Sigmoid colon (tissue), 7 donors: ENCODE measurements at regions of chr11 and their contacts with region 1.

Region 1: GRCh38 chr11:65569973-65570918 is at the start of gene ZNRD2:
- DNase-seq: peak; percentile 100
- H3K4me3 ChIP-seq: peak within 1 kb of the TSS; percentile 66 to 87 (median 74)
- H3K27ac ChIP-seq: peak within 1 kb of the TSS; percentile 91 to 98 (median 98)
- H3K4me1 ChIP-seq: peaks cover 0 to 75% (median 58%) of the 10 kb centered on the region in 4 donors
- H3K27me3 ChIP-seq: no peaks in the 10 kb centered on the region
- CTCF ChIP-seq: peak in 1 of 4 experiments; percentile 30
- EP300 ChIP-seq: peak in 2 of 4 donors; percentile 67 to 72
- POLR2A ChIP-seq: peak; percentile 48 to 78
- total RNA-seq, gene ZNRD2: 24.9 to 61.0 (median 58.5) TPM

Region 2: GRCh38 chr11:65540297-65541092 is 29.8 kb before region 1 on chr11:
- intact Hi-C with region 1: loop called (anchors 1 kb)
- DNase-seq: peak; percentile 95
- H3K4me3 ChIP-seq: peak overlapping the region; percentile 31 to 52 (median 50)
- H3K27ac ChIP-seq: peak overlapping the region; percentile 90 to 94 (median 91)
- H3K4me1 ChIP-seq: peaks cover 0 to 30% (median 26%) of the 10 kb centered on the region in 4 donors
- H3K27me3 ChIP-seq: no peaks in the 10 kb centered on the region
- CTCF ChIP-seq: peak; percentile 90 to 99 (median 94)
- EP300 ChIP-seq: no peak
- POLR2A ChIP-seq: peak; percentile 8 to 29

Region 3: GRCh38 chr11:65558002-65558931 is 12.0 kb before region 1 on chr11 and contains the start of gene LTBP3:
- intact Hi-C with region 1: loop called (anchors 2 kb)
- DNase-seq: peak; percentile 94
- H3K4me3 ChIP-seq: peak within 1 kb of the TSS; percentile 55 to 85 (median 72)
- H3K27ac ChIP-seq: peak within 1 kb of the TSS; percentile 96 to 99 (median 98)
- H3K4me1 ChIP-seq: peaks cover 0 to 71% (median 66%) of the 10 kb centered on the region in 4 donors
- H3K27me3 ChIP-seq: no peaks in the 10 kb centered on the region
- CTCF ChIP-seq: no peak
- EP300 ChIP-seq: peak in 1 of 4 donors; percentile 45
- POLR2A ChIP-seq: no peak
- total RNA-seq, gene LTBP3: 79.6 to 268 (median 117) TPM

Region 4: GRCh38 chr11:65615229-65615941 is 45.1 kb after region 1 on chr11 and contains the start of gene PCNX3:
- intact Hi-C with region 1: loop called (anchors 2 kb)
- DNase-seq: peak; percentile 100
- H3K4me3 ChIP-seq: peak within 1 kb of the TSS; percentile 74 to 98 (median 88)
- H3K27ac ChIP-seq: peak within 1 kb of the TSS; percentile 89 to 95 (median 92)
- H3K4me1 ChIP-seq: peaks cover 0 to 58% (median 47%) of the 10 kb centered on the region in 4 donors
- H3K27me3 ChIP-seq: no peaks in the 10 kb centered on the region
- CTCF ChIP-seq: no peak
- EP300 ChIP-seq: peak in 1 of 4 donors; percentile 67
- POLR2A ChIP-seq: peak; percentile 52 to 65
- total RNA-seq, gene PCNX3: 10.7 to 21.3 (median 14.3) TPM

Region 5: DNA sequence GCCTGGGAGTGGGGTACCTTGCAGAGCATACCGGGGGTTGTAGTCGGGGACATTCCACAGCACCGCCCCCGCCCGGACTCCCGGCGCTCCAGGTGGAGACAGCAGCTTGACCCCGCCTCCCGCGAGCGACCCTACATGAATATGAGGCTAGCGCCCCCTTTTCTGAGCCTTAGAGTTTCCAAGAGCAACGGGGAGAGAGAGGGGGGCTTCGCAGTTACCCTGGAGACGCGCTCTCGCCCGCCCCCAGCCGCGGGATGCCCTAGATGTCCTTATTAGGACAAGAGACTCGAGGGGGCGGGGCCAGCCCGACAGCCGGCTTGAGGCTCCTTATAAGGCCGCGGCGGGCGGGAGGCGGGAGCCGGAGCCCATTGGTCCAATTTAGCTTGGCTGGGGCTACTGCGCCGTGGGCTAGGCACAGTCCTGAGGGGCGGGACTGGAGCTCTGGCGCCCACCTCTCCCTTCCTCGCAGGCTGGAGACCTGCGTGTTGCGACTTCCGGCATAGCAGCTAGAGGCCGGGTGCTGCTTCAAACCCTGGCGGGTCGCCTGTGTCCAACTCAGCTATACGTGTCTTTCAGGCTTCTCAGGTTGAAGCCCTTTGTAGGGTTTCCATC is 289.1 kb after region 1 on chr11:
- intact Hi-C with region 1: loop called (anchors 5 kb)
- DNase-seq: peak; percentile 100
- H3K4me3 ChIP-seq: peak overlapping the region; percentile 79 to 98 (median 90)
- H3K27ac ChIP-seq: peak overlapping the region; percentile 89 to 99 (median 95)
- H3K4me1 ChIP-seq: peaks cover 0 to 61% (median 50%) of the 10 kb centered on the region in 4 donors
- H3K27me3 ChIP-seq: no peaks in the 10 kb centered on the region
- CTCF ChIP-seq: no peak
- EP300 ChIP-seq: peak in 1 of 4 donors; percentile 28
- POLR2A ChIP-seq: peak; percentile 98 to 99